T-cell (primary cell): ENCODE measurements at regions of chr13 and their contacts with region 1.

Region 1: GRCh38 chr13:77480066-77480465 is 55.4 kb upstream of the SCEL start:
- DNase-seq: no peak
- ATAC-seq: no peak
- H3K4me3 ChIP-seq: no peak overlapping the region
- H3K4me3 Mint-ChIP-seq: no peak overlapping the region
- H3K27ac ChIP-seq: no peak overlapping the region
- H3K27ac Mint-ChIP-seq: no peak overlapping the region
- H3K4me1 ChIP-seq: peaks cover 0 to 3% of the 10 kb centered on the region in 2 experiments
- H3K4me1 Mint-ChIP-seq: peaks cover 6 to 10% (median 10%) of the 10 kb centered on the region in 3 donors
- H3K27me3 ChIP-seq: no peaks in the 10 kb centered on the region
- H3K27me3 Mint-ChIP-seq: no peaks in the 10 kb centered on the region

Region 2: GRCh38 chr13:77136902-77137420 is 343.1 kb before region 1 on chr13:
- CTCF ChIA-PET with region 1: interaction called in 1 of 2 experiments, 10 read pairs
- POLR2A ChIA-PET with region 1: no interaction called
- DNase-seq: no peak
- ATAC-seq: no peak
- H3K4me3 ChIP-seq: no peak overlapping the region
- H3K4me3 Mint-ChIP-seq: no peak overlapping the region
- H3K27ac ChIP-seq: no peak overlapping the region
- H3K27ac Mint-ChIP-seq: peak overlapping the region; percentile 18 to 59
- H3K4me1 ChIP-seq: no peaks in the 10 kb centered on the region
- H3K4me1 Mint-ChIP-seq: peaks cover 0 to 6% (median 0%) of the 10 kb centered on the region in 3 donors
- H3K27me3 ChIP-seq: no peaks in the 10 kb centered on the region
- H3K27me3 Mint-ChIP-seq: no peaks in the 10 kb centered on the region

Region 3: GRCh38 chr13:77274126-77274525 is 205.9 kb before region 1 on chr13:
- CTCF ChIA-PET with region 1: interaction called, 7 to 24 read pairs
- POLR2A ChIA-PET with region 1: no interaction called
- DNase-seq: peak in 1 of 35 experiments; percentile 11
- ATAC-seq: no peak
- H3K4me3 ChIP-seq: no peak overlapping the region
- H3K4me3 Mint-ChIP-seq: no peak overlapping the region
- H3K27ac ChIP-seq: no peak overlapping the region
- H3K27ac Mint-ChIP-seq: peak overlapping the region in 1 of 2 donors; percentile 61
- H3K4me1 ChIP-seq: no peaks in the 10 kb centered on the region
- H3K4me1 Mint-ChIP-seq: peaks cover 7 to 16% (median 16%) of the 10 kb centered on the region in 3 donors
- H3K27me3 ChIP-seq: no peaks in the 10 kb centered on the region
- H3K27me3 Mint-ChIP-seq: no peaks in the 10 kb centered on the region

Region 4: DNA sequence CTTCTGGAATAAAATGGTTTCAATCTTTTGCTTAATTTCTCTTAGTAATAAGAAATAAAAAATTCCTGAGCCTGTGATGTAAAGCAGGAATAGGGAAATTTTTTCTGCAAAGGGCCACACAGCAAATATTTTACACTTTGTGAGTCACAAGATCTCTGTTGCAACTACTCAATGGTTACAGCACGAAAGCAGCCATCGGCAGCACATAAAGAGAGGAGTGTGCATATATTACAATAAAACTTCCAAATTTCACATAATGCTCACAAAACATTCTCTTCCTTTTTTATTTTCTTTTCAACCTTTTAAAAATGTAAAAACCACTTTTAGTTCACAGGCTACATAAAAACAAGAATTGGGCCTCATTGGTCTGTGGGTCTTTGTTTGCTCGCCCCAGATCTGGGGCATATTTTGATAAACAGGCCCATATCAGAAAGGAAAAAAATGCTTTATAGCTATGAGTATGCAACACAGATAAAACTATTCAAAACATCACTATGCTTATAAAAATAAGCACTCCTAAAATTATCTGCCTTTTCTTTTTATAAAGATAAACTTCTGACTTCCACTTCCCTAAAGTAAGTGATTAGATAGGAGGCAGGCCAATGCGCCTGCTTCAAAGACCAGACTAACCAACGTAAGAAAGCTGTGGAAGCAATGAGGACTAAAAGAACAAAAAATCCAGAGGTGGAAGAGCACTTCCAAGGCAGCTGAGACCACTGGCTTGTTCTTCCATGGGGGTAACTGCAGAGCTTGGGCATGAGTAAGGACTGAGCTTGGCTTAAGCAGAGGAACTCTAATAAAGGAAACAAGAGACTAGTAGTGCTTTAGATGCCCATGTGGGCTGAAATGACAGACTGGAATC is 179.7 kb before region 1 on chr13:
- CTCF ChIA-PET with region 1: interaction called, 6 to 10 read pairs
- POLR2A ChIA-PET with region 1: no interaction called
- DNase-seq: no peak
- ATAC-seq: no peak
- H3K4me3 ChIP-seq: no peak overlapping the region
- H3K4me3 Mint-ChIP-seq: peak overlapping the region in 1 of 3 donors; percentile 29
- H3K27ac ChIP-seq: no peak overlapping the region
- H3K27ac Mint-ChIP-seq: peak overlapping the region; percentile 10 to 34
- H3K4me1 ChIP-seq: peaks cover 4 to 13% of the 10 kb centered on the region in 2 experiments
- H3K4me1 Mint-ChIP-seq: peaks cover 76 to 80% (median 77%) of the 10 kb centered on the region in 3 donors
- H3K27me3 ChIP-seq: no peaks in the 10 kb centered on the region
- H3K27me3 Mint-ChIP-seq: no peaks in the 10 kb centered on the region

Region 5: GRCh38 chr13:77335543-77335942 is 144.5 kb before region 1 on chr13:
- CTCF ChIA-PET with region 1: interaction called, 15 to 35 read pairs
- POLR2A ChIA-PET with region 1: no interaction called
- DNase-seq: no peak
- ATAC-seq: no peak
- H3K4me3 ChIP-seq: no peak overlapping the region
- H3K4me3 Mint-ChIP-seq: no peak overlapping the region
- H3K27ac ChIP-seq: no peak overlapping the region
- H3K27ac Mint-ChIP-seq: no peak overlapping the region
- H3K4me1 ChIP-seq: peaks cover 0 to 10% of the 10 kb centered on the region in 2 experiments
- H3K4me1 Mint-ChIP-seq: peaks cover 24 to 45% (median 38%) of the 10 kb centered on the region in 3 donors
- H3K27me3 ChIP-seq: no peaks in the 10 kb centered on the region
- H3K27me3 Mint-ChIP-seq: no peaks in the 10 kb centered on the region

Region 6: DNA sequence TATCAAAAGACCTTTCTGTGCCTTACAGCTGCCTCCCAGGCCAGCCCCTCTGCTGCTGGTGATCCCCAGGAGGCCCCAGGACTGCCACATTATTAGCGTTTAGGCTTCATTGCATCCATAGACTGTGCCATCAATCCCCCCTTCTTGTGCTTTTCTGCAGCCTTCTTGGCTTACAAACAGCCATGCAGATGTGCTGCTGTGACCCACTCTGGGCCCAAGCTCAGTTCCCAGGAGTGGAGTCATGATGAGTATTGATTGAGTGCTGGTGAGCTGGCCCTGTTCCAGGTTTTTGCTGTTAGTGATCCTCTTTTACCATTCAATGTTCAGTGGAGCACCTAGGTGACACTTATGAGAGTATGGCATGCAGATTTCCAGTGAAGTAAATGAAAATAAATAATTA is 157.5 kb after region 1 on chr13:
- CTCF ChIA-PET with region 1: no interaction called
- POLR2A ChIA-PET with region 1: no interaction called
- DNase-seq: no peak
- ATAC-seq: no peak
- H3K4me3 ChIP-seq: no peak overlapping the region
- H3K4me3 Mint-ChIP-seq: no peak overlapping the region
- H3K27ac ChIP-seq: no peak overlapping the region
- H3K27ac Mint-ChIP-seq: no peak overlapping the region
- H3K4me1 ChIP-seq: no peaks in the 10 kb centered on the region
- H3K4me1 Mint-ChIP-seq: no peaks in the 10 kb centered on the region
- H3K27me3 ChIP-seq: no peaks in the 10 kb centered on the region
- H3K27me3 Mint-ChIP-seq: peaks cover 0 to 3% of the 10 kb centered on the region in 2 donors